ENCODE measurements at regions of chr18 and their contacts with region 1.

Region 1: GRCh38 chr18:59402432-59403090 is 43.5 kb upstream of the LMAN1 start:
- DNase-seq: peak; percentile 88
- H3K4me3 ChIP-seq: no peak overlapping the region
- H3K27ac ChIP-seq: no peak overlapping the region
- H3K4me1 ChIP-seq: no peaks in the 10 kb centered on the region
- H3K27me3 ChIP-seq: no peaks in the 10 kb centered on the region
- CTCF ChIP-seq: peak; percentile 68 to 99 (median 98)
- EP300 ChIP-seq: no peak
- POLR2A ChIP-seq: no peak
- RAD21 ChIP-seq: peak; percentile 97 to 99

Region 2: DNA sequence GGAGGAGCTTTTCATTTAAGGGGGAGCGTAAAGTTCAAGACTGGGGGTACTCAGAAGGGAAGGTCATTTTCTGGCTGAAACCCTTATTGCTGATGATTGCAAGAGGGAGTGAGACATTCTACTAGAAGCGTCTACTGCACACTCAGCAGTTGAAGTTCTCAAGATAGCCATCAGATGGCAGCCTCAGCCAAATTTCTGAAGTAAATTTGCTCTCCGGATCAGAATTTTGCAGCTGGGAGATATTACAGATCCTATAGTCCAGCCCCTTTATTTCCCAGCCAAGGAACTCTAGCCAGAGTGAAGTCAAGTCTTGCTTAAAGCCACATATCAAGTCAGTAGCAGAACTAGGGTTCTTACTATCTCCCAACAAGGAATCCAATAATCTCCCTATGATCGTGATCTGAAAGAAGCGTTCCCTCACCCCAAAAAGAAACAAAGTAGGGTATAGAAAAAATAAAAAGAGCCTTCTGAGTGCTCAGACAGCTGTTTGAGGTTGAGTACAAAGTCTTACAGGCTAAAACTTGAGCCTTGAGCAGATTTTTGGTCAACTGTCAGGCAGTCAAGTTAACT is 153.3 kb before region 1 on chr18:
- CTCF ChIA-PET with region 1: interaction called, 64 read pairs
- POLR2A ChIA-PET with region 1: interaction called, 3 read pairs
- DNase-seq: peak in 1 of 2 experiments; percentile 66
- H3K4me3 ChIP-seq: no peak overlapping the region
- H3K27ac ChIP-seq: no peak overlapping the region
- H3K4me1 ChIP-seq: no peaks in the 10 kb centered on the region
- H3K27me3 ChIP-seq: no peaks in the 10 kb centered on the region
- CTCF ChIP-seq: peak in 2 of 3 experiments; percentile 81 to 84; a peak in 3 of 4 replicates
- EP300 ChIP-seq: no peak
- POLR2A ChIP-seq: no peak
- RAD21 ChIP-seq: peak; percentile 85 to 93

Region 3: DNA sequence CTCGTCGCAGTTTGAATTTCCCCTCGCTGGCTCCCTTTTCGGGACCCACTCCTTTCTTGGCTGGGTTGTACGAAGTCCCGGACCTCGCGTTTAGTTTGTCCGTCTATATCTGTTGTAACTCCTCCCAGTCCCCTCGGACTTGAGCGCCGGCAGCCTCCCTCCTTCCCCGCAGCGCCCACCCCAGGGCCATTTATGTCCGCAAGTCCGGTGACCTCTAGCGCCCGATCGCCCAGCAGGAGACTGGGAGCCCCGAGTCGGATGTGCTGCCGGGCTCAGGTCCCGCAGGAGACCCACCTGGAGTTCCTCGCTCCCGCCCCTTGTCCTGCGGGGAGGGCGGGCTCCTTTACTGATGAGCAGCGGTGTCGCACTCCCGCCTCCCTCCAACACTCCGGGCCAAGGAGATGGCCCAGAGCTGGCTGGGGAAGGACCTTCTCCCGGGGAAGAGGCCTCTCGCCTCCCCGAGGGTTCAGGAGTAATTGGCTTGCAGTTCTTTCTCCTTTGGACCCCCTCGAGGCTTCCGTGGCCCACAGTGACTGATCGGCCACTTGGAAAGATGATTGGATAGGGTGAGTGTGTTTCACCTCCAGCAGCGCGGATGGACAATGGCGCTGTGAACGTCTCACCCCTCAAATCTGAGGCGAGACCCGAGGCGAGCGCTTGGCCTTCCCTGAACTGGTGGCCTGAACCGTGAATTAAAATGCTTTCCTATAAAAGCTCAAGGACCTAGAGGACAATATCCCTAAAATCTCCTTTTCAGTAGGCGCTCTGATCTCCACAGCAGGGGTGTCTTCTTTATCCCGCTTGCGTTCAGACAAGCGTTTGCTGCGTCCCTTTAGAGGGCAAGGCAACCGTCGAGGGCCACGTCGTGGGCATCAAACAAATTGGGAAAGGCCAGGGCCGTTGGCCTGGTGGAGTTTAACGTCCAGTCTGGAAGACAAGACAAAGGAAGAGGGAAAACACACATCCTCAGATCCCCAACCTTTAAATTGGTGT is 128.3 kb before region 1 on chr18:
- CTCF ChIA-PET with region 1: interaction called, 67 read pairs
- POLR2A ChIA-PET with region 1: no interaction called
- DNase-seq: peak in 1 of 2 experiments; percentile 77
- H3K4me3 ChIP-seq: peak overlapping the region; percentile 45 to 75 (median 71)
- H3K27ac ChIP-seq: no peak overlapping the region
- H3K4me1 ChIP-seq: peaks cover 6 to 21% (median 14%) of the 10 kb centered on the region in 4 experiments; a peak in 6 of 7 replicates
- H3K27me3 ChIP-seq: peaks cover 58 to 94% (median 77%) of the 10 kb centered on the region in 4 experiments
- CTCF ChIP-seq: no peak
- EP300 ChIP-seq: no peak
- POLR2A ChIP-seq: no peak
- RAD21 ChIP-seq: no peak

Region 4: GRCh38 chr18:59308248-59308937 is 94.2 kb before region 1 on chr18:
- CTCF ChIA-PET with region 1: interaction called, 70 read pairs
- POLR2A ChIA-PET with region 1: interaction called, 3 read pairs
- DNase-seq: peak; percentile 15 to 89
- H3K4me3 ChIP-seq: peak overlapping the region; percentile 14 to 54 (median 47); a peak in 7 of 8 replicates
- H3K27ac ChIP-seq: no peak overlapping the region
- H3K4me1 ChIP-seq: no peaks in the 10 kb centered on the region; a peak in 1 of 7 replicates
- H3K27me3 ChIP-seq: peaks cover 0 to 13% (median 6%) of the 10 kb centered on the region in 4 experiments; a peak in 6 of 7 replicates
- CTCF ChIP-seq: peak; percentile 58 to 92 (median 74)
- EP300 ChIP-seq: no peak
- POLR2A ChIP-seq: no peak
- RAD21 ChIP-seq: peak; percentile 75 to 82

Region 5: DNA sequence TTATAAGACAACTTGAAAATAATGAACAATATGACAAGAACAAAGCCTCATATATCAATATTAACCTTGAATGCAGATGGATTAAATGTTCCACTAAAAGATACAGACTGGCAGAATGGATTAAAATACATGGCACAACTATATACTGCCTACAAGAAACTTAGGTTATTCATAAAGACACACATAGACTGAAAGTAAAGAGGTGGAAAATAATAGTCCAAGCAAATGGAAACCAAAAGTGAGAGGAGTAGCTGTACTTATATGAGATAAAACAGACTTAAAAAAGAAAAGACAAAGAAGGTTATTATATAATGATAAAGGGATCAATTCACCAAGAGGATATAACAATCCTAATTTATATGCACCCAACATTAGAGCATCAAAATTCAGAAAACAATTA is 61.7 kb before region 1 on chr18:
- CTCF ChIA-PET with region 1: interaction called, 12 read pairs
- POLR2A ChIA-PET with region 1: no interaction called
- DNase-seq: no peak
- H3K4me3 ChIP-seq: no peak overlapping the region
- H3K27ac ChIP-seq: no peak overlapping the region
- H3K4me1 ChIP-seq: no peaks in the 10 kb centered on the region
- H3K27me3 ChIP-seq: no peaks in the 10 kb centered on the region
- CTCF ChIP-seq: no peak
- EP300 ChIP-seq: no peak
- POLR2A ChIP-seq: no peak
- RAD21 ChIP-seq: no peak

Region 6: DNA sequence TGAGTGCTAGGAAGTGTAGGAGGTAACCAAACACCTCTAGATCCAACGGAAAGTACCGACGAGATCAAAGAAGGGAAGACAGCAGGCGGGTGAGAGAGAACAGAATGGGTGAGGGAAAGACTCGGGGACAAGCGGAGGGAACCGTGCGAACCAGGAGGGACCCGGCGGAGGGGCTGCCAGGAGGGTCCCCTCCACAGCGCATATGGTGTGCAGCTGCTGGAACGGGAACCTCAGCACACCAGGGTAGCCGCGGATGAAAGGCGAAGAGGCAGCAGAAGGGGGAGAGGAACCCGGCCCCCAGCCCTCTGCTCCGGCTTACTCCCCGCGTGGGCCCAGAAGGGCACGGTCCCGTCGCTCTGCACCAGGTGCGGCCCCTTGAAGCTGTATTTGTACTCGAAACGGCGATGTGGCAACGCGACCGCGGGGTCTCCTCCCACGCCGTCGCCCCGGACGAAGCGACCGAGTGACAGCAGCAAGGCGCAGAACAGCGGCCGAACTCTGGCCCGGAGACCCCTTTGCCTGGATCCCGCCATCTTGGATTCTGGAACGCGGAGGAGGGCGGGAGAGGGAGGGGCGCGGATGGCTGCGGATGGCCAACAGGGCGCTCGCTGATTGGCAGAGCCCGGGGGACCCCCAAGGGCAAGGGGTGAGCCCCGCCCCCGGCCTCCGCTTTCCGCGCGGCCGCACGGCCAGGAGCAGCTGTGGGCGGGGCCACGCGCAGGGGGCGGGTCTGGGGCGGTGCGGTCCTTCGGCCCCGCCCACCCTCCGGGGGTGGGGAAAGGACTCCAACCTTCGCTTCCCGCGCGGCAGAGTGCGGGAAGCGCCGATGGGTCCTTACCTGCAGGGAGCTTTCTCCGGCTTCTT is 43.6 kb before region 1 on chr18 and contains the start of gene LMAN1:
- CTCF ChIA-PET with region 1: interaction called, 25 read pairs
- POLR2A ChIA-PET with region 1: interaction called, 4 read pairs
- DNase-seq: peak; percentile 86 to 98
- H3K4me3 ChIP-seq: peak within 1 kb of the TSS; percentile 84 to 93 (median 88)
- H3K27ac ChIP-seq: peak within 1 kb of the TSS; percentile 83
- H3K4me1 ChIP-seq: no peaks in the 10 kb centered on the region; a peak in 2 of 7 replicates
- H3K27me3 ChIP-seq: peaks cover 0 to 9% (median 5%) of the 10 kb centered on the region in 4 experiments; a peak in 4 of 7 replicates
- CTCF ChIP-seq: no peak
- EP300 ChIP-seq: no peak
- POLR2A ChIP-seq: peak; percentile 67 to 97
- RAD21 ChIP-seq: no peak
- total RNA-seq, gene LMAN1: 69.7 and 73.6 TPM in 2 replicates

Region 7: GRCh38 chr18:59387687-59388565 is 14.6 kb before region 1 on chr18:
- CTCF ChIA-PET with region 1: interaction called, 64 read pairs
- POLR2A ChIA-PET with region 1: interaction called, 3 read pairs
- DNase-seq: no peak
- H3K4me3 ChIP-seq: no peak overlapping the region
- H3K27ac ChIP-seq: no peak overlapping the region
- H3K4me1 ChIP-seq: peaks cover 0 to 3% (median 2%) of the 10 kb centered on the region in 4 experiments; a peak in 2 of 7 replicates
- H3K27me3 ChIP-seq: peaks cover 0 to 18% (median 4%) of the 10 kb centered on the region in 4 experiments; a peak in 5 of 7 replicates
- CTCF ChIP-seq: no peak
- EP300 ChIP-seq: no peak
- POLR2A ChIP-seq: no peak
- RAD21 ChIP-seq: no peak

Region 8: GRCh38 chr18:59697236-59697932 is 294.8 kb after region 1 on chr18 and contains the start of gene CCBE1:
- CTCF ChIA-PET with region 1: no interaction called
- POLR2A ChIA-PET with region 1: no interaction called
- DNase-seq: peak; percentile 49 to 96
- H3K4me3 ChIP-seq: peak within 1 kb of the TSS; percentile 65 to 80 (median 72)
- H3K27ac ChIP-seq: no peak within 1 kb of the TSS
- H3K4me1 ChIP-seq: peaks cover 7 to 34% (median 15%) of the 10 kb centered on the region in 4 experiments
- H3K27me3 ChIP-seq: peaks cover 7 to 35% (median 31%) of the 10 kb centered on the region in 4 experiments
- CTCF ChIP-seq: peak; percentile 81 to 88 (median 82)
- EP300 ChIP-seq: no peak
- POLR2A ChIP-seq: no peak
- RAD21 ChIP-seq: peak; percentile 55 to 68
- total RNA-seq, gene CCBE1: 2.6 and 4.4 TPM in 2 replicates

Measured in H1 (cell line).